ENCODE measurements at regions of chr6 and their contacts with region 1.

Region 1: DNA sequence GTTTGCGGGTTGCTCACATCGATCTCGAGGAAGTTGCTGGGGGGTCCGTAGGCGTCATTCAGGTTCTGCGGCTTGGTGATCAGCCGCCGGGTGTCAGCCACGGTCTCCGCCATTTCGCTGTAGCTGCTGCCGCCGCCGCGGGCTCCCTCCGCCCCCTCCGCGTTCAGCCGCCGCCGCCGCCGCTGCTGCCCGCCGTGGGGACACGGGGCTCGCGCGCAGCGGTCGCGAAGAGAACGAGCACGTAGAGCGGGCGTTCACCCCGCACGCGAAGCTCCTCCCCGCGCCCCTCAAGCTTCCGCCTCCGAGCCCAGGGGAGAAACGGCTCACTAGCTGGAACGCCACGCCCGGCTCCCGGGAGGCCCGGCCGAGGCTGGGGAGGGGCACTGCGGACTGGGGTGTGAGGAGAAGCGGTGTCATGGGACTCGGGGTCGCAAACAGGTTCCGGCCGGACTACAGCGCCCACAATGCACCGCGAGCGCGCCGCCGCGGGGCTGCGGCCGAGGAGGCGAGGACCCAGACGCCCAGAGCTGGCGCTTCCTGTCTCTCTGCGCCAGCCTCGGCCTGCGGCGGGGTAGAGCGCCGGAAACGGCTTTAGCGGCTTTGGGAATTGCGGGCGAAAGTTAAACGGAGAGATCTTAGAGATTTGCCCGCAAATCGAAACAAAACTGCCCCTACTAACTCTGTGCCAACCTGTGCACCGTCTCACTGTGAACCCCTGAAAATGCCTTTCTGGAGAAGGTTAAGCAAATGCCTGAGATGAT is at the start of gene SNX3:
- DNase-seq: peak; percentile 97
- H3K4me3 ChIP-seq: peak within 1 kb of the TSS; percentile 85 to 88 (median 86)
- H3K27ac ChIP-seq: peak within 1 kb of the TSS; percentile 93 to 95 (median 94)
- H3K4me1 ChIP-seq: peaks cover 26 to 47% (median 40%) of the 10 kb centered on the region in 4 donors
- H3K27me3 ChIP-seq: no peaks in the 10 kb centered on the region
- CTCF ChIP-seq: peak in 1 of 3 experiments; percentile 10
- EP300 ChIP-seq: no peak
- POLR2A ChIP-seq: peak; percentile 65
- total RNA-seq, gene SNX3: 148 to 176 (median 151) TPM

Region 2: GRCh38 chr6:107964671-107965340 is 296.2 kb before region 1 on chr6:
- intact Hi-C with region 1: loop called (anchors 10 kb)
- DNase-seq: no peak
- H3K4me3 ChIP-seq: no peak overlapping the region
- H3K27ac ChIP-seq: no peak overlapping the region
- H3K4me1 ChIP-seq: peaks cover 0 to 4% (median 2%) of the 10 kb centered on the region in 4 donors
- H3K27me3 ChIP-seq: no peaks in the 10 kb centered on the region
- CTCF ChIP-seq: no peak
- EP300 ChIP-seq: no peak
- POLR2A ChIP-seq: no peak

Region 3: DNA sequence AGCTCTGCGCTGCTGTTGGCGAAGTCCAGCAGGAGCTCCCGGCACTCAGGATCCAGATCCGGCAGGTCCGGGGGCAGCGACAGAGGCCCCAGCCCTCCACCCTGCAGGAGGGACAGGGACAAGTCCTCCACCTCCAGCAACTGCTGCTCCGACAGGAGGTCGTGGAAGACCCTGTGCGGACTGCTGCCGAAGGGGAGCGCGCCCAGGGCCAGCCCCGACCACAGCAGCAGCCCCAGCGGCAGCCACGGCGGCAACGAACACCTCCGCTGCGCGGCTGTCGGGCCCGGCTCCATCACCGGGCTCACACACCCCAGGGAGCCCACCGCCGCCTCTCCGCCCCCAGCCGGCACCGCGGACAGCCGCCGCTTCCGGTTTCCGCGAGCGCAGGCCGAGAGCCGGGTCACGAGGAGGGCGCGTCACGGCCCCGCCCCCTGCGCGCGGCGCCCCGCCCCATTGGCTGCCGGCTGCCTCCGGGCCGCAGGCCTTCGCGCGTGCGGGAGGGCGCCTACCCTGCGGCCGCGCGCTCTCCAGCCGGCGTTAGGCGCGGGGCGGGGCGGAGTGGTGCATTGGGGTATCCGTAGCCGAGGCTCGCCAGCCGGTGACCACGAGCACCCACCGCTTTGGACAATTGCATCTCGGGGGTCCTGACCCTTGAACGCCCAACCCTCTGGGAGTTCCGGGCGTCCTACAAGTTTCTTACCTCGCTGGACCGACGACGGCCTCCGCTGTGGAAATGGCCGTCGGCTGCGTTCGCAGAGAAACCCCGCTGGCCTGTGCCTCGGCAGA is 186.4 kb before region 1 on chr6 and contains the start of gene OSTM1:
- intact Hi-C with region 1: loop called (anchors 10 kb)
- DNase-seq: peak; percentile 95
- H3K4me3 ChIP-seq: peak within 1 kb of the TSS; percentile 69 to 97 (median 86)
- H3K27ac ChIP-seq: peak within 1 kb of the TSS; percentile 81 to 87 (median 86)
- H3K4me1 ChIP-seq: peaks cover 8 to 26% (median 23%) of the 10 kb centered on the region in 4 donors
- H3K27me3 ChIP-seq: no peaks in the 10 kb centered on the region
- CTCF ChIP-seq: peak in 1 of 3 experiments; percentile 17
- EP300 ChIP-seq: no peak
- POLR2A ChIP-seq: peak; percentile 51
- total RNA-seq, gene OSTM1: 48.2 to 74.4 (median 61.2) TPM

Region 4: DNA sequence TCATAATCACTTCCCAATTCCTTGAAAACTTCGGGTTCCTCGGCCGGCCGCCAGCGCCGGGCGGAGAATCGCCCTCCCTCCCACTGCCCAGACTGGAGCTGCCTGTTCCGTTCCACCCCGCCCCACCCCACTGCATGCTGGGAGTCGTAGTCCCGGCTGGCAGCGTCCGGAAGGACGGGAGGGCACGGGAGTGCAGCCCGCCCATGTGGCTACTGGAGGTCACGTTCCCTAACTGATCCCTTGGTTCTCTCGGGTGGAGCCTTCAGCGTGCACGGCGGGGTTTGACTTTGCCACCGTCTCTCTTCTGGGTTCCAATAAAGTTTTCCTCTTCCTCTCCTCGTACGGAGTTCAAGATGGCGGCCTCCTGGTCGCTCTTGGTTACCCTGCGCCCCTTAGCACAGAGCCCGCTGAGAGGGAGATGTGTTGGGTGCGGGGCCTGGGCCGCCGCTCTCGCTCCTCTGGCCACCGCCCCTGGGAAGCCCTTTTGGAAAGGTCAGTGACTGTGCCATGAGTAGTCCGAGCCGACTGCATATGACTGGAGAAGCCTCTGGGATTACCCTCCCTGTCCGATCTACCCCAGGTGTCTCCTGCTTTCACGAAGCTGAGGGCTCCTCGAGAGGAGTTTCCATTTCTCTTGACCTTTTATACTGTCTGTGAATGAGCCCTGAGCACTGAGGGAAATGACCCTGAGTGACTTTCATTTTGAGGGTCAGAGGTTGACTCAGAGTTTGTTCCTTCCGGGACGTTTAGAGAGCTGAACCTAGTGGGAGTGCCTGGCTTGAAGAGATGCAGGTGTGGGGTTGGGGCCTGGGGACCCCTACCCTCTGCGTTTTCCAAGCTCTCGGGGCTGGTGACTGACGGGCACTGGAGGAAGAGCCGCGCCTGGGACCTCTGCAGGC is 34.0 kb after region 1 on chr6 and contains the start of gene AFG1L:
- intact Hi-C with region 1: loop called (anchors 2 kb)
- DNase-seq: peak; percentile 97
- H3K4me3 ChIP-seq: peak within 1 kb of the TSS; percentile 78 to 98 (median 86)
- H3K27ac ChIP-seq: peak within 1 kb of the TSS; percentile 89 to 92 (median 90)
- H3K4me1 ChIP-seq: peaks cover 7 to 14% (median 11%) of the 10 kb centered on the region in 4 donors
- H3K27me3 ChIP-seq: no peaks in the 10 kb centered on the region
- CTCF ChIP-seq: no peak
- EP300 ChIP-seq: no peak
- POLR2A ChIP-seq: peak; percentile 38
- total RNA-seq, gene AFG1L: 1.5 to 5.4 (median 3.3) TPM